ENCODE measurements at regions of chr12 and their contacts with region 1.

Region 1: GRCh38 chr12:107379852-107380567 is 286.7 kb upstream of the CRY1 start:
- DNase-seq: no peak
- H3K4me3 ChIP-seq: no peak overlapping the region
- CTCF ChIP-seq: no peak

Region 2: GRCh38 chr12:107402041-107403022 is 22.3 kb after region 1 on chr12:
- CTCF ChIA-PET with region 1: interaction called, 14 read pairs
- POLR2A ChIA-PET with region 1: no interaction called
- DNase-seq: no peak
- H3K4me3 ChIP-seq: no peak overlapping the region
- CTCF ChIP-seq: peak; percentile 74